Activated naive CD4-positive, alpha-beta T cell treated with anti-CD3 and anti-CD28 coated beads for 36 hours (primary cell): ENCODE measurements at regions of chr2 and their contacts with region 1.

Region 1: DNA sequence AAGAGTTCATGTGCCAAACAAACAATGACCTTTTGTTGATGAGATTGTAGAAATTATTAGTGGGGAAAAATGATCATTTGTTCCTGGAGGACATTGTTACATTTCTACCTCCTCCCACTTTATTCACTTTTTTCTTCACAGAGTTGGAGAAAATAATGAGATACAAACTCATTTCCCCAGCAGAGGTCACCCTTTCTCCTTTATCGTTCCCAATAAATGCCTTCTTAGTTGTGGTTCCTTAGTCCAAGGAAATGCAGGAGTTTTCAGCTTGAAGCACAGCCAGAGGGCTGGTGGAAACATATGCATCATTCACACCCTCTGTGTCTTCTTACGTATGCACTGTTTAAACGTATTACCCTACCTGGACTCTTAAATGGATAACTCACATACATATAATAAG is 108.8 kb downstream of the SLC4A3 start:
- DNase-seq: peak; percentile 11
- H3K4me3 Mint-ChIP-seq: no peak overlapping the region
- H3K27ac Mint-ChIP-seq: no peak overlapping the region
- H3K4me1 Mint-ChIP-seq: no peaks in the 10 kb centered on the region
- H3K27me3 Mint-ChIP-seq: peaks cover 11% of the 10 kb centered on the region

Region 2: DNA sequence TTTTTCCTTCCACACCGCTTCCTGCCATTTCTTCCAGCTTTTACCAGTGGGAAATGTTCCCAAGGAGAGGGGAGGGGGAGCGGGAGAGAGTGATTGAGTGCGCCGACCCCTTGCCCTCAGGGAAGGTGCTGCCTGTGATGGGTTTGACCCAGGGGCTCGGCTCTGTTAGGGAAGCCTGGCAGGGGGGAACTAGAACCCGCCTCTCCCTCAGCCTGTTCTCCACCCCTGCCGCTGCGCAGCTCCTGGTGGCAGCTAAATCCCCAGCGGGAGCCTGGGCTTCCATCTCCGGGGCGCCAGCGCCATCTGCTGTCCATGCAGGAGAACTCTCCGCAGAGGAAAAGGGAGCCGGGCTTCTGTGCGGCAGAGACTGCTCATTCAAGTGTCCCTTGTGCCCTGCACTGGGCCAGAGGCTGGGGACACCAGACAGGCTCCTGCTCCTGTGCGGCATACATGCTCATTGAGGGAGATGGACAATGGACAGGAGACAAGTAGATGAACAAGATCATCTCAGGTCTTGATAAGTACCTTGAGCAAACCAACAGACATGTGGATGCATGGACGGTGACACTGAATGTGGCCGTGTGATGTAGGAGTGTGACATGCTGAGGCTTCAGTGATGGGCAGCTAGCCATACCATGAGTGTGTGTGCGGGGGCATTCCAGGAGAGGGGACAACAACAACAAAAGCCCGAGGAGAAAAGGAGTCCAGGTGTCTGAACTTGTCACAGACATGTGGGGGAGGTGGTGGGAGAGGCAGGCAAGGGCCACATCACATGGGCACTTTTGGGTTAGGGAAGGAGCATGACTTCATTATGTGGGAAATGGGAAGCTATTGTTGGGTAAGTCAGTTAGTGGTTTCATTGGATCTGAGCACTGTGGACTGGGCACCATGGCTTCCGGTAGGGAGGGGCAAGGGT is 205.9 kb before region 1 on chr2:
- CTCF ChIA-PET with region 1: no interaction called
- intact Hi-C with region 1: no loop called
- DNase-seq: peak; percentile 90
- H3K4me3 Mint-ChIP-seq: no peak overlapping the region
- H3K27ac Mint-ChIP-seq: no peak overlapping the region
- H3K4me1 Mint-ChIP-seq: no peaks in the 10 kb centered on the region
- H3K27me3 Mint-ChIP-seq: peaks cover 52% of the 10 kb centered on the region

Region 3: GRCh38 chr2:219765231-219765911 is 29.2 kb after region 1 on chr2:
- CTCF ChIA-PET with region 1: no interaction called
- intact Hi-C with region 1: no loop called
- DNase-seq: no peak
- H3K4me3 Mint-ChIP-seq: no peak overlapping the region
- H3K27ac Mint-ChIP-seq: no peak overlapping the region
- H3K4me1 Mint-ChIP-seq: no peaks in the 10 kb centered on the region
- H3K27me3 Mint-ChIP-seq: peaks cover 6% of the 10 kb centered on the region

Region 4: DNA sequence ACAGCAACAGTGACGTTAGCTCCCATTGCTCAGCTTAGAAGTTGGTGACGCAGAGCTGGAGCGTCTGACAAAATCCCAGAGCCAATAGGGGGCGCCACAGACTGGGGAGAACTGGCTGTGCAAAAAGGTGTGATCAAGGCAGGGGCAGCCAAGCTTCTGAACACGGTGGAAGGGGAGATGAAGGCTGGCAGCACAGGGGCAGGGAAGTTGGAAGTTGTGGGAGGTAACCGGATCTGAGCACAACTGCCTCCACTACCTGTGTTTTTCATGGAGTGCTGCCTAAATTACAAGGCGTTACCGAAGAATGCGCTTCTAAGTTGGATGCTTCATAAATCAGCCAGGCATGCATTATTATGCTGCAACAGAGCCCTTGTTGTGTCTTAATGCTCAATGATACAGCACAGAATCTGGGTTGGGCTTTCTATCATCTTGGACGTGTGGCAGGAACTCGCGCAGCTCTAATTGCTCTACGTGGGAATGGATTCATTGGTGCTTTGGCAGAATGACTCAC is 261.2 kb after region 1 on chr2:
- CTCF ChIA-PET with region 1: no interaction called
- intact Hi-C with region 1: loop called (anchors 2 kb)
- DNase-seq: peak; percentile 44
- H3K4me3 Mint-ChIP-seq: no peak overlapping the region
- H3K27ac Mint-ChIP-seq: no peak overlapping the region
- H3K4me1 Mint-ChIP-seq: no peaks in the 10 kb centered on the region
- H3K27me3 Mint-ChIP-seq: peaks cover 7% of the 10 kb centered on the region

Region 5: GRCh38 chr2:220687231-220687843 is 951.1 kb after region 1 on chr2:
- CTCF ChIA-PET with region 1: no interaction called
- intact Hi-C with region 1: loop called (anchors 1 kb)
- DNase-seq: peak; percentile 72
- H3K4me3 Mint-ChIP-seq: no peak overlapping the region
- H3K27ac Mint-ChIP-seq: no peak overlapping the region
- H3K4me1 Mint-ChIP-seq: no peaks in the 10 kb centered on the region
- H3K27me3 Mint-ChIP-seq: peaks cover 12% of the 10 kb centered on the region